ENCODE measurements at regions of chr7 and their contacts with region 1.

Region 1: GRCh38 chr7:91880413-91881241 is at the start of gene MTERF1:
- DNase-seq: peak; percentile 95
- ATAC-seq: peak; percentile 99
- total RNA-seq, gene MTERF1: 9.9 TPM

Region 2: GRCh38 chr7:91832493-91833045 is 48.1 kb before region 1 on chr7:
- intact Hi-C with region 1: loop called (anchors 5 kb)
- DNase-seq: no peak
- ATAC-seq: no peak

Region 3: GRCh38 chr7:92042056-92042737 is 161.6 kb after region 1 on chr7:
- intact Hi-C with region 1: loop called (anchors 10 kb)
- DNase-seq: no peak
- ATAC-seq: no peak

Region 4: GRCh38 chr7:92134271-92135051 is 253.8 kb after region 1 on chr7 and contains the start of gene CYP51A1:
- intact Hi-C with region 1: loop called (anchors 10 kb)
- DNase-seq: peak; percentile 95
- ATAC-seq: peak; percentile 97
- total RNA-seq, gene CYP51A1: 19.3 TPM

Region 5: DNA sequence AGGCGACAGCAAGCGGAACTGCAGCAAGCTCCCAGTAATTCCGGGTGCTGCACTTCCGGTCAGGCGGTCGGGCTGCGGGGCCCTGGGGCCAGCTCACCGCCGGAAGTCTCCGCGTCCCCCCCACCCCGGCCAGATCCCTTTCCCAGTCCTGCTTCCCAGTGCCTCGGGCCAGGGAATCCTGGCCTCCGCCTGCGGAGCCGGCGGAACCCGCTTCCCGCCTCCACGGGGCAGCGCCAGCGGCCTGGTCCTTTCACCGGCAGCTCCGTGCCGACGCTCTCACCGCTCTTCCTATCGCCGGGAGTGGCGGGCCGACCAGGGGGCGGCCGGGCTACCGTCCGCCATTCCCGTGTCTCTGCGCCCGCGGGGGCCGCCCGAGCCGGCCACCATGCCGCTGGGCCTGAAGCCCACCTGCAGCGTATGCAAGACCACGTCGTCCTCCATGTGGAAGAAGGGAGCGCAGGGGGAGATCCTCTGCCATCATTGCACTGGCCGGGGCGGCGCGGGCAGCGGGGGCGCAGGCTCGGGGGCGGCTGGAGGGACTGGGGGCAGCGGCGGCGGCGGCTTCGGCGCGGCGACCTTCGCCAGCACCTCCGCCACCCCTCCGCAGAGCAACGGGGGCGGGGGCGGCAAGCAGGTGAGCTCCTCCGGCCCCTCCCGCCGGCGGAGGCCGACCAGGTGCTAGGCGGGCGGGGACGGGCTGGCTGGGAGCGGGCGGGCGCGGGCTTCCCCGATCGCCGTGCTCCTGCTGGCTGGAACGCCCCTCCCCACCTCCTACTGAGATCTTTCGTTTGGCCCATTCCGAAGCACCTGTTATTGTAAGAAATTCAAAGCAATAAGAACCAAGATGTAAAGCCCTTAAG is 566.9 kb after region 1 on chr7 and contains the start of gene GATAD1:
- intact Hi-C with region 1: loop called (anchors 2 kb)
- DNase-seq: peak; percentile 94
- ATAC-seq: peak; percentile 99
- total RNA-seq, gene GATAD1: 11.8 TPM